ENCODE measurements at regions of chr2 and their contacts with region 1.

Region 1: DNA sequence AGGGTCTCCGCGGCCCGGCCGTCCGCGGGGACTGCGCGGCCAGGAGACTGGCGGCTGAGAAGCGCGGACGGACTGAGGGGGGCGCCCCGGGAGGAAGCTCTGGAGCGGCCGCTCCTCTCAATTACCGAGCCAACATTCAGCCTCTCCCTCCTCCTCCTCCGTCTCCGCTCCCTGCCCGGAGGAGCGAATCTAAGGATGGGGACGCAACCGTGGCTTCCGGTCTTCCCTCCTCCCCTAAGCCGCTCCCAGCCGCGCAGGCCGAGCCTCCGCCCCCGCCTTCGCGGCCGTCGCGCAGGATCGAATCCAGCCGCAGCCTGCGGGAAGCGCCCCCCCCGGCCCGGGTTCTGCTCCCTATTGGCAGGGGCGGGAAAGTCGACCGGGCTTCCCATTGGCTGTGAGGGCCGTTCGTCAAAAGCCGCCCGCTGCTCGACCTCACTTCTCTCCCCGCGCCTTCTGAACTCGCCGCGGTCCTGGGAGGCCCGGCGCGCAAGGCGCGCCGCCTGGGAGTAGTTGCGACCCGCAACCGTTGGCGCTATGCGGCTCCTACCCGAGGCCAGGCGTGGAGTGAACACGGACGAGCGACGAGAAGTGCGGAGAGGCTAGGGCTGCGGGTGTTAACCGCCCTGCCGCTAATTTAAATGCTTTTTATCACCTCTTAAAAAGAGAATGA is at the start of gene HNRNPLL:
- DNase-seq: peak; percentile 57
- H3K4me3 ChIP-seq: peak within 1 kb of the TSS; percentile 88 to 96 (median 90)
- H3K27ac ChIP-seq: peak within 1 kb of the TSS; percentile 68
- H3K4me1 ChIP-seq: peaks cover 22% of the 10 kb centered on the region
- H3K27me3 ChIP-seq: no peaks in the 10 kb centered on the region
- CTCF ChIP-seq: no peak
- polyA plus RNA-seq, gene HNRNPLL: 17.8 to 53.8 TPM (median 30.6 TPM) in 3 replicates

Region 2: GRCh38 chr2:38720613-38721241 is 117.9 kb after region 1 on chr2:
- dilution Hi-C with region 1: loop called (anchors 25 kb)
- DNase-seq: no peak
- H3K4me3 ChIP-seq: no peak overlapping the region
- H3K27ac ChIP-seq: no peak overlapping the region
- H3K4me1 ChIP-seq: peaks cover 7% of the 10 kb centered on the region
- H3K27me3 ChIP-seq: no peaks in the 10 kb centered on the region
- CTCF ChIP-seq: no peak

Measured in keratinocyte (primary cell).